Heart right ventricle (tissue), 16 donors: ENCODE measurements at regions of chr11 and their contacts with region 1.

Region 1: GRCh38 chr11:32414925-32415324 is 20.4 kb downstream of the WT1 start:
- DNase-seq: no peak
- ATAC-seq: no peak
- H3K4me3 ChIP-seq: no peak overlapping the region
- H3K27ac ChIP-seq: no peak overlapping the region
- H3K4me1 ChIP-seq: peaks cover 0 to 10% (median 0%) of the 10 kb centered on the region in 9 donors
- H3K27me3 ChIP-seq: peaks cover 0 to 14% (median under 1%) of the 10 kb centered on the region in 7 donors
- CTCF ChIP-seq: no peak

Region 2: DNA sequence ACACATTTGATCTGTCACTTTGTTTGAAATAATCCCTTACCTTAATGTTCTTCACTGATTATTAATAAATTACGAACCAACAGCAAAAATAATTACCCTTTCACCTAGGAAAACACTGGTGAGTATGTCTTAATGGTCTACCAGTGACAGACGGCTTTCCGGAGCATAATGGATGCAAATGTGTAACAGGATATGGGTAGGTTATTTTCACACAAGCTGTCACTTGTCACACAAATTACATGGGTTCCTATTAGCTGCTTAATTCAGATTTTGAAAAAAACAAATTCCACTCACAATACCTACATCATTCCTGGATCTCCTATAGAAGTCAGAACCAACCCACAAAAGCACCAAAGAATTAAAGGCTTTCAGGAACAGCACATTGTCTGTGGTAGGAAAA is 107.5 kb before region 1 on chr11:
- intact Hi-C with region 1: no loop called
- DNase-seq: no peak
- ATAC-seq: no peak
- H3K4me3 ChIP-seq: no peak overlapping the region
- H3K27ac ChIP-seq: no peak overlapping the region
- H3K4me1 ChIP-seq: no peaks in the 10 kb centered on the region
- H3K27me3 ChIP-seq: peaks cover 0 to 31% (median 1%) of the 10 kb centered on the region in 7 donors
- CTCF ChIP-seq: no peak

Region 3: DNA sequence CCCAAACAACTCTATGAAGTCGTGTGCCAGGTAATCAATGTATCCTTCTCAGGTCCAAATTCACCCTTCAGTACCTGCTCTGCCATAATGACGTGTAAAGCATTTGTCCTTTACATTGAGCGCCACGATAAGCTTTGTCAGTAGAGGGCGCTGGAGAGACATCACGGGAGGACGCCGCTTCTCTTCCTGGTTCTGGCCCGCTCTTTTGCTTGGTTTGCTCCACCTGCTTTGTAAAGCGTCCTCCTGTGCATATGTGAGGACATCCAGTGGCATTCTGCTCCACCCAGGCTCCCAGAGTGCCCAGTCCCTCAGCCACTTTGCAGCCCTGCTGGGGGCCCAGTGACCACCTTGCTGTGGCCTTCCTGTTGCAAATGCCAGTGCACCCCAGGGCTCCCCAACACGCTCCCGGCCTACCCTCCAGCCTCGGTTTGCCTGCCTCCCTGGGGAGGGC is 40.6 kb before region 1 on chr11:
- intact Hi-C with region 1: no loop called
- DNase-seq: peak in 1 of 2 donors; percentile 31
- ATAC-seq: peak in 2 of 8 donors; percentile 41 to 61
- H3K4me3 ChIP-seq: no peak overlapping the region
- H3K27ac ChIP-seq: no peak overlapping the region
- H3K4me1 ChIP-seq: no peaks in the 10 kb centered on the region
- H3K27me3 ChIP-seq: peaks cover 0 to 7% (median 0%) of the 10 kb centered on the region in 7 donors
- CTCF ChIP-seq: peak; percentile 32 to 68 (median 56)

Region 4: DNA sequence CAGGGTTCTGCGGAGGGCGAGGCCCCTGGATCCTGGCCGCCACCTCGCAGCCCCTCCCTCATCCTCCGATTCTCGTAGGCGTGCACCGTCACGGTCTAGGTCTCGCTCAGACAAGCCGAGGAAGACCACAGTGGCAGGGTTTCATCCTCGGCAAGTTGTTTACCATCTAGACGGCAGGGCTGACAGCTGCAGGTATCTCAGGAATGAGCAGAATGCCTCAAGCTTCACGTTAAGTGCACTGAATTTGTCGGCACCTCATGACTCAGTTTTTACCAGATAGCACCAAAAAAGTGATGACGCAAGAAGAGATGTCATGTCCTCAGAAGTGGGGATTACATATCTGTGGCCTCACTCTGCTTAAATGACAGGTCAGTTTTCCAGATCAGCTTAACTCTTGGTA is 14.7 kb before region 1 on chr11:
- intact Hi-C with region 1: loop called in 1 of 10 experiments (anchors 1 kb)
- DNase-seq: no peak
- ATAC-seq: no peak
- H3K4me3 ChIP-seq: no peak overlapping the region
- H3K27ac ChIP-seq: no peak overlapping the region
- H3K4me1 ChIP-seq: peaks cover 0 to 2% (median 0%) of the 10 kb centered on the region in 9 donors
- H3K27me3 ChIP-seq: peaks cover 0 to 20% (median 0%) of the 10 kb centered on the region in 7 donors
- CTCF ChIP-seq: no peak

Region 5: GRCh38 chr11:32466279-32466915 is 51.5 kb after region 1 on chr11:
- intact Hi-C with region 1: no loop called
- DNase-seq: no peak
- ATAC-seq: peak in 1 of 8 donors; percentile 27
- H3K4me3 ChIP-seq: no peak overlapping the region
- H3K27ac ChIP-seq: no peak overlapping the region
- H3K4me1 ChIP-seq: no peaks in the 10 kb centered on the region
- H3K27me3 ChIP-seq: no peaks in the 10 kb centered on the region
- CTCF ChIP-seq: no peak